Activated B cell treated with CpG ODN at 0.5 μM for 24 hours (primary cell): ENCODE measurements at regions of chr10 and their contacts with region 1.

Region 1: GRCh38 chr10:128011175-128011979 is 104.5 kb downstream of the PTPRE start:
- DNase-seq: peak; percentile 87
- ATAC-seq: peak; percentile 99
- H3K4me3 Mint-ChIP-seq: no peak overlapping the region
- H3K27ac Mint-ChIP-seq: peak overlapping the region; percentile 62
- H3K4me1 Mint-ChIP-seq: peaks cover 9% of the 10 kb centered on the region
- H3K27me3 Mint-ChIP-seq: peaks cover 12% of the 10 kb centered on the region
- CTCF ChIP-seq: peak; percentile 27

Region 2: DNA sequence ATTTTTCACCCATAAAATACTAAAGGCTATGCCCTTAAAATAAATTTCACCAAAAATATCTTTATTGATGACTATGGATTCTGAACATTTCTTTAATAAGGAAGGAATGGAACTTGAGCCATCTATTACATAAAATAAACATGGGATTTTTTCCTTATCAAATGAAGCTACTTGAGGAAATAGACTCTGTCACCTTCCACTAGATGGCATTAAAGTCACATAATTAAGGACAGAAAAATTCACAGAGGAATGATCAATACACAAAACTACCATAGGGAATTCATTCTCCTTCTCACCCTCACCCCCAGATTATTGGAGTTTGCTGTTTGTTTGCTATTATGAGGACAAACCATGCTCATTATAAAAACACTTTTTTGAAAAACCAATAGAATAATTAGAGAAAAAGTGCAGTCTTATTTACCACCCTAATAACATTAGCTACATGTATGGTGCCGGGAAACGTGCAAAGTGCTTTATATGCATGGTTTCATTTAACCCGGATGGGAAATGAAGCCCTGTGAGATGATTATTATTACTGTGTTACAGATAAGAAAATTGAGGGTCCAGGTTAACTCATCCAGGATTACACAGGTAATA is 295.5 kb before region 1 on chr10:
- CTCF ChIA-PET with region 1: interaction called, 15 read pairs
- POLR2A ChIA-PET with region 1: no interaction called
- intact Hi-C with region 1: loop called (anchors 1 kb)
- DNase-seq: no peak
- ATAC-seq: no peak
- H3K4me3 Mint-ChIP-seq: no peak overlapping the region
- H3K27ac Mint-ChIP-seq: no peak overlapping the region
- H3K4me1 Mint-ChIP-seq: no peaks in the 10 kb centered on the region
- H3K27me3 Mint-ChIP-seq: no peaks in the 10 kb centered on the region
- CTCF ChIP-seq: no peak

Region 3: GRCh38 chr10:127755753-127756152 is 255.6 kb before region 1 on chr10:
- CTCF ChIA-PET with region 1: interaction called, 8 read pairs
- POLR2A ChIA-PET with region 1: no interaction called
- intact Hi-C with region 1: loop called (anchors 2 kb)
- DNase-seq: no peak
- ATAC-seq: no peak
- H3K4me3 Mint-ChIP-seq: no peak overlapping the region
- H3K27ac Mint-ChIP-seq: no peak overlapping the region
- H3K4me1 Mint-ChIP-seq: no peaks in the 10 kb centered on the region
- H3K27me3 Mint-ChIP-seq: peaks cover 8% of the 10 kb centered on the region
- CTCF ChIP-seq: no peak

Region 4: GRCh38 chr10:127906548-127907377 is 104.6 kb before region 1 on chr10 and contains the start of gene PTPRE:
- CTCF ChIA-PET with region 1: interaction called, 27 read pairs
- POLR2A ChIA-PET with region 1: no interaction called
- intact Hi-C with region 1: loop called (anchors 1 kb)
- DNase-seq: peak; percentile 71
- ATAC-seq: peak; percentile 98
- H3K4me3 Mint-ChIP-seq: peak within 1 kb of the TSS; percentile 29
- H3K27ac Mint-ChIP-seq: no peak within 1 kb of the TSS
- H3K4me1 Mint-ChIP-seq: no peaks in the 10 kb centered on the region
- H3K27me3 Mint-ChIP-seq: peaks cover 47% of the 10 kb centered on the region
- CTCF ChIP-seq: no peak
- total RNA-seq, gene PTPRE: 28.2 and 36.8 TPM in 2 replicates

Region 5: GRCh38 chr10:128035557-128035973 is 24.2 kb after region 1 on chr10:
- CTCF ChIA-PET with region 1: interaction called, 10 read pairs
- POLR2A ChIA-PET with region 1: no interaction called
- intact Hi-C with region 1: no loop called
- DNase-seq: peak; percentile 50
- ATAC-seq: peak; percentile 81
- H3K4me3 Mint-ChIP-seq: no peak overlapping the region
- H3K27ac Mint-ChIP-seq: no peak overlapping the region
- H3K4me1 Mint-ChIP-seq: no peaks in the 10 kb centered on the region
- H3K27me3 Mint-ChIP-seq: peaks cover 2% of the 10 kb centered on the region
- CTCF ChIP-seq: peak; percentile 18

Region 6: DNA sequence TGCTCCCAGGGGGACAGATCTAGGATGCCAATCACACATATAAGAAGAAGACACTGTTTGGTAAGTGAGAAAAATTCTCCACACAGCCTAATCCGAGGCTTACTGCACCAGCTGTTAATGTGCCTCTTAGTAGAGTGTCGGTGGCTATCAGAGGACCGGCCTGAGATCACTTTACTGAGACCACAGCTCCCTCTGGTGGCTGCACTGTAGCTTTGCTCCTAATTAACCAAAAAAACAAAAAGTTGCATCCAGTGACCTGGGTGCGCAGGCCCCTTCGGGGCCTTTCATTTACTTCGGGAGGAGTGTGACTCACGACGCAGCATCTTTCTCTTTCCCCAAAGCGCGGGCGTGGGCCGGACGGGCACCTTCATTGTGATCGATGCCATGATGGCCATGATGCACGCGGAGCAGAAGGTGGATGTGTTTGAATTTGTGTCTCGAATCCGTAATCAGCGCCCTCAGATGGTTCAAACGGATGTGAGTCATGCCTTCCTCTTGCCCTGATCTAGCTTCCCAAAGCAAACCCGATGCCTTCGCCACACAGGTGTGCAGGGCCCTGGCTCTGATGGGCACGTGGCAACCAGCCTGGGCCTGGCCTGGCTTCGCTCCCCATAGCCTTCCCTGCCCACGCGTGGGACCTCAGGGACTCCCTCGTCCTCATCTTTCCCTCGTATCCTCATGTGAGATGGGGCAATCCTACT is 58.1 kb after region 1 on chr10:
- CTCF ChIA-PET with region 1: interaction called, 19 read pairs
- POLR2A ChIA-PET with region 1: no interaction called
- intact Hi-C with region 1: loop called (anchors 1 kb)
- DNase-seq: peak; percentile 67
- ATAC-seq: peak; percentile 13
- H3K4me3 Mint-ChIP-seq: no peak overlapping the region
- H3K27ac Mint-ChIP-seq: no peak overlapping the region
- H3K4me1 Mint-ChIP-seq: peaks cover 34% of the 10 kb centered on the region
- H3K27me3 Mint-ChIP-seq: no peaks in the 10 kb centered on the region
- CTCF ChIP-seq: no peak